Motor neuron (in vitro differentiated cells): ENCODE measurements at regions of chr5 and their contacts with region 1.

Region 1: GRCh38 chr5:156824800-156825199 is 25.3 kb upstream of the PPP1R2B start:
- ATAC-seq: peak in 4 of 8 experiments; percentile 41 to 78 (median 58)
- H3K4me3 ChIP-seq: no peak overlapping the region
- H3K27ac ChIP-seq: no peak overlapping the region
- H3K4me1 ChIP-seq: no peaks in the 10 kb centered on the region

Region 2: GRCh38 chr5:155147222-155147621 is 1677.6 kb before region 1 on chr5:
- in situ Hi-C with region 1: loop called in 2 of 9 experiments (anchors 25 kb)
- ATAC-seq: no peak
- H3K4me3 ChIP-seq: no peak overlapping the region
- H3K27ac ChIP-seq: no peak overlapping the region
- H3K4me1 ChIP-seq: no peaks in the 10 kb centered on the region

Region 3: DNA sequence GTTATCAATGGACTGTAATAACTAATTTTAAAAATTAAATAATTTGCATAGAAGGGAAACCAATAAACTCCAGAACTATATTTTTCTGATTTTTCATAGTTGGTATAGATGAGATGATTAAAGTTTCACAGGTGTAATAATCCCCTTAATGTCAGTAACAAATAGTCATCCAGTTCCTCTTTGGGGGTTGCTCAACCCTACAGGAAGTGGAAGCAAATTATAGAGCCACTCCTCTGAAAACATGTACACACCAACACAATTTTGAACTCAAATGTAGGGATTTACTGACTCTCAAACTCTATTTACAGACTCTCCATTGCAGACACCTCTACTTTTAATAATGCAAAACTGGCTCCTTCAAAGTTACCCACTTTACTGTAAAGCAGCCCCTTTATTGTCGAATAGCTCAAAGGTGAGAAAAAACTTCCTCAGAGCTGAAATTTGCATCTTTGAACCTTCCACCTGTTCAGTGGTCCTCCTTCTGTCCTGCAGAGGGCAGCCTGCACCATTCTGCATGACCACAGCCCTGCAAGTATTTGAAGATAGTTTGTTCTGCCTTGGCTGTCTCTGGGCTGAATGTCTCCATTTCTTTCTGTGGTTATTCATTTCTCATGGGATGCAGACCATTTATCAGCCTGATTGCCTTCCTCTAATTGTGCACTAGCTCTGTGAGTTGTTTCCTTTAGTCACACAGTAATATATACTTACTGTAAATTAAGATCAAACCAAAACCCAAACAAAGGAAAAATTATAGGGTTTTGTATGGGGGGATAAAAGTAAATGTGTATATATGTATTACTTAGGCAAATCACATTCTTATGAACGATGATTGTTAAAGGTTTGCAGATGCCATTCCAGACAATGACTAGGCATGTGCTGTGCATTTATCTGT is 881.0 kb before region 1 on chr5:
- in situ Hi-C with region 1: loop called in 5 of 9 experiments (anchors 10 to 25 kb)
- ATAC-seq: peak; percentile 73 to 94 (median 87)
- H3K4me3 ChIP-seq: no peak overlapping the region
- H3K27ac ChIP-seq: no peak overlapping the region
- H3K4me1 ChIP-seq: peaks cover 0 to 4% of the 10 kb centered on the region in 2 donors

Region 4: GRCh38 chr5:157108976-157109375 is 284.2 kb after region 1 on chr5 and contains the start of gene HAVCR2:
- in situ Hi-C with region 1: loop called in 1 of 9 experiments (anchors 25 kb)
- ATAC-seq: no peak
- H3K4me3 ChIP-seq: no peak within 1 kb of the TSS
- H3K27ac ChIP-seq: no peak within 1 kb of the TSS
- H3K4me1 ChIP-seq: no peaks in the 10 kb centered on the region
- total RNA-seq, gene HAVCR2: 0.10 to 1.3 (median 0.25) TPM in 7 of 8 experiments, not detected in the other